Aorta (tissue), 5 donors: ENCODE measurements at regions of chr17 and their contacts with region 1.

Region 1: GRCh38 chr17:49548506-49549310 is 27.0 kb upstream of the NXPH3 start:
- DNase-seq: no peak
- ATAC-seq: peak; percentile 65
- H3K4me3 ChIP-seq: no peak overlapping the region
- H3K27ac ChIP-seq: no peak overlapping the region
- H3K4me1 ChIP-seq: no peaks in the 10 kb centered on the region
- H3K27me3 ChIP-seq: no peaks in the 10 kb centered on the region

Region 2: DNA sequence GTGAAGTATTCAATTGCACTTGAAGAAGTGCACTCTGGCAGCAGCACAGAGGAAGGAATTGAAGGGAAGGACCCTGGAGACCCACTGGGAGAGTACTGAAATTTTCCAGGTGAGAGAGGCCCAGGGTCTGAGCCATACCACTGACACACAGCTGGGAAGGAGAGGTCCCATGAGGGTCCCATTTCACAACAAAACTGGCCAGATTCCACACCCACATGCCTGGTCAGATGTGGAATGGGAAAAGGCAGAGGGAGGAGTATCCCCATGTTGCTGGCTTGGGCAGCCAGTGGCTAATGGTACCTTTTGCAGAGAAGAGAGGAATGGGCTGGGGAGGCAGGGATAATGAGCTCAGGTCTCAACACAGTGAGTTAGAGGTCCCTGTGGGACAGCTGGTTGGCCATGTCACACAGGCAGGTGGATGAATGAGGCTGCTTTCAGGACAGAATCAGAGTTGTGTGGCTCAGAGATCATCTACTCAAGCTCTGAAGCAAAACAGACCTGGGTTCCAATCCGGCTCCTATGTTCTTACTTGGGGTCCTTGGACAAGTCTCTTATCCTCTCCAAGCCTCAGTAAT is 79.8 kb before region 1 on chr17:
- intact Hi-C with region 1: no loop called
- DNase-seq: no peak
- ATAC-seq: no peak
- H3K4me3 ChIP-seq: no peak overlapping the region
- H3K27ac ChIP-seq: no peak overlapping the region
- H3K4me1 ChIP-seq: no peaks in the 10 kb centered on the region
- H3K27me3 ChIP-seq: no peaks in the 10 kb centered on the region

Region 3: DNA sequence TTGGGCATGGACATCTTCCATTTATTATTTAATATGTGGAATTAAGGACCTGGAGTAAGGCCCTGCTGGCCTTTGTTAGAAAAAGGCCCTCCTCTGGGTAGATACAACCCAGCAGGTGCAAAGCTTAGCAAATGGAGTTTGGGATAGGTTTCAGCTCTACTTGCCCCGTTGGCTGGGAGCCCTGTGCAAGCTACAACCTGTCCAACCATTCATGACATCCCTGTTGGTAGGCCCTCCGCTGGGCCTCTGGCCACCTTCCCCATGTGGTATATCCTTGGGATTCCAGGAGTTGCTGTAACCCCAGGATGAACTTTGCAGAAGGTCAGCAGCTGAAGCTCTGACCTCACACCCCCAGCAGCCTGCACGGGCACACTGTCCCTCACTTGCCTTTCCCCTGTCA is 47.2 kb before region 1 on chr17:
- intact Hi-C with region 1: loop called in 1 of 2 experiments (anchors 5 kb)
- DNase-seq: no peak
- ATAC-seq: no peak
- H3K4me3 ChIP-seq: no peak overlapping the region
- H3K27ac ChIP-seq: no peak overlapping the region
- H3K4me1 ChIP-seq: no peaks in the 10 kb centered on the region
- H3K27me3 ChIP-seq: no peaks in the 10 kb centered on the region

Region 4: GRCh38 chr17:49515196-49515770 is 33.4 kb before region 1 on chr17:
- intact Hi-C with region 1: loop called in 1 of 2 experiments (anchors 5 kb)
- DNase-seq: peak; percentile 93 to 95
- ATAC-seq: peak; percentile 95
- H3K4me3 ChIP-seq: no peak overlapping the region
- H3K27ac ChIP-seq: peak overlapping the region; percentile 12 to 16
- H3K4me1 ChIP-seq: no peaks in the 10 kb centered on the region
- H3K27me3 ChIP-seq: no peaks in the 10 kb centered on the region

Region 5: GRCh38 chr17:49588726-49589576 is 40.2 kb after region 1 on chr17:
- intact Hi-C with region 1: no loop called
- DNase-seq: no peak
- ATAC-seq: no peak
- H3K4me3 ChIP-seq: no peak overlapping the region
- H3K27ac ChIP-seq: peak overlapping the region; percentile 62 to 90
- H3K4me1 ChIP-seq: peaks cover 2 to 3% of the 10 kb centered on the region in 2 donors
- H3K27me3 ChIP-seq: no peaks in the 10 kb centered on the region

Region 6: GRCh38 chr17:49798182-49798581 is 249.5 kb after region 1 on chr17:
- intact Hi-C with region 1: no loop called
- DNase-seq: no peak
- ATAC-seq: no peak
- H3K4me3 ChIP-seq: no peak overlapping the region
- H3K27ac ChIP-seq: no peak overlapping the region
- H3K4me1 ChIP-seq: peaks cover 0 to 2% of the 10 kb centered on the region in 2 donors
- H3K27me3 ChIP-seq: no peaks in the 10 kb centered on the region